Activated CD4-positive, alpha-beta memory T cell treated with anti-CD3 and anti-CD28 coated beads for 36 hours (primary cell): ENCODE measurements at regions of chr12 and their contacts with region 1.

Region 1: DNA sequence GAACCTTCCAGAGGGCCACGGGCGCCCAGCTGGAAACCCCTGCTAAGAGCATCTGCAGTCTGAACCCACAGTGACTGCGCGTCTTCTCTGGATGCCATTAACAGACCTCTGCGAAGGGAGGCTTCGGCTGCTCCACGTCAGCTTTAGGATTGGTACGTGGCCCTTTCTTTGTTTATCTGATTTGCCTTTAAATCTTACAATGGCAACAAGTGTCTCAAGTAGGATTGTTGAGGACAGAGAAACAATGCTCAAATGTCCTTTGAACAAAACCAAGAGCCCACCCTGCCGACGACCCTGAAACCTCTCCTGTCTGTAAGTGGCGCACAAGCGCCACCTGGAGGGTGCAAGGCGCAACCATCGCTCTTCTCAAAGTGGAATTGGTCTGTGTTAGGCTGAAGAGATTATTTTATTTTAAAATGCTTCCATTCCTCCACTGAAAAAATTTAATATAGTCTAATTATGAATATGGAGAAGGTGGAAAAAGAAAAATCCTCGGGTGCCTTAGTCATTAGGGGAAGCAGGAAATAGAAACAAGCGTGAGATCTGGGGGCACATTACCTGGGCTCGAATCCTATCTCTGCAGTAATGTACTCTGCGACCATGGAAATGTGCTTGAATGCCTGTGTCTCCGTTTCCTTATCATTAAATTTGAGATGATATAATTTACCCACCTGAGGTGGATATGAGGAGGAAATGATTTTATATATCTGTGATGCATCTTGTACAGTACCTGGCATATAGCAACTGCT is 82.6 kb upstream of the PTPRB start:
- DNase-seq: peak; percentile 22
- H3K4me3 Mint-ChIP-seq: no peak overlapping the region
- H3K27ac Mint-ChIP-seq: no peak overlapping the region
- H3K4me1 Mint-ChIP-seq: peaks cover 5% of the 10 kb centered on the region
- H3K27me3 Mint-ChIP-seq: peaks cover 7% of the 10 kb centered on the region

Region 2: GRCh38 chr12:69879041-69879960 is 840.5 kb before region 1 on chr12:
- CTCF ChIA-PET with region 1: interaction called, 18 read pairs
- POLR2A ChIA-PET with region 1: no interaction called
- intact Hi-C with region 1: no loop called
- DNase-seq: peak; percentile 72
- H3K4me3 Mint-ChIP-seq: peak overlapping the region; percentile 7
- H3K27ac Mint-ChIP-seq: no peak overlapping the region
- H3K4me1 Mint-ChIP-seq: peaks cover 7% of the 10 kb centered on the region
- H3K27me3 Mint-ChIP-seq: peaks cover 15% of the 10 kb centered on the region

Region 3: GRCh38 chr12:70590051-70590450 is 129.8 kb before region 1 on chr12:
- CTCF ChIA-PET with region 1: no interaction called
- POLR2A ChIA-PET with region 1: no interaction called
- intact Hi-C with region 1: loop called (anchors 1 kb)
- DNase-seq: peak; percentile 63
- H3K4me3 Mint-ChIP-seq: no peak overlapping the region
- H3K27ac Mint-ChIP-seq: no peak overlapping the region
- H3K4me1 Mint-ChIP-seq: no peaks in the 10 kb centered on the region
- H3K27me3 Mint-ChIP-seq: peaks cover 12% of the 10 kb centered on the region